ENCODE measurements at regions of chr1 and their contacts with region 1.

Region 1: DNA sequence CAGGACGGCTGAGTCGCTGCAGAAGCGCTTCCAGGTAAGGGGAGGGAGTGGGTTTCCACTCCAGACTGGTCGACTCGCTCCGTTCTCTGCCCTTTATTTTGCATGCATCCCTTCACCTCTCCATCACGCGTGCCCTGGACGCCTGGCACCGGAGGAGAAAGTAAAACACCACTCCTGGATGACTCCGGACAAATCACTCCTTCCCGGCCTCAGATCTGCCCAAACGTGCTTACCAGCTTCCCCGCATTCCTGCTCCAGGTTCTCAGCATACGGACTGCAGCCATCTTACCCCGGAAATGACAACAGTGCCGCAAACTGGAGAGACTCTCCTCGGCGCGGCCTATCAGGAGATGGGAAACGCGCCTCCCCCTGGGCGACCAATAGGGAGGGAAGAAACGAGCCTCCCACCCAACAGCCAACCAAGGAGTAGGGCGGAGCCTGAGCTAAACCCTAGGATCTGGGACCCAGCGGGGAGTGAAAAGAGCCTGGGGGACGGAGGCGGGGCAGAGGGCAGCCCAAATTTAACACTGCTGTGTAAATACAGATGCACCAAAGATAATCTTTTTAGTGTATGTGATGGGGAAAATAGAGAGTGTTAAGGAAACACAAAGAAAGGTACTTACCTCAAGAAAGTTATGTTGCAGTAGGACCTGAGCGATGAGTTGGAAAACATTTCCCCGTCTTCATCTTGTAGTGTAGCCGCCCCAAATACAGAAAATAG is at the start of gene DBT:
- DNase-seq: peak; percentile 97
- H3K4me3 Mint-ChIP-seq: no peak within 1 kb of the TSS
- H3K27ac Mint-ChIP-seq: no peak within 1 kb of the TSS
- H3K4me1 Mint-ChIP-seq: peaks cover 18% of the 10 kb centered on the region
- H3K27me3 Mint-ChIP-seq: no peaks in the 10 kb centered on the region
- total RNA-seq, gene DBT: 12.3 to 12.5 TPM

Region 2: DNA sequence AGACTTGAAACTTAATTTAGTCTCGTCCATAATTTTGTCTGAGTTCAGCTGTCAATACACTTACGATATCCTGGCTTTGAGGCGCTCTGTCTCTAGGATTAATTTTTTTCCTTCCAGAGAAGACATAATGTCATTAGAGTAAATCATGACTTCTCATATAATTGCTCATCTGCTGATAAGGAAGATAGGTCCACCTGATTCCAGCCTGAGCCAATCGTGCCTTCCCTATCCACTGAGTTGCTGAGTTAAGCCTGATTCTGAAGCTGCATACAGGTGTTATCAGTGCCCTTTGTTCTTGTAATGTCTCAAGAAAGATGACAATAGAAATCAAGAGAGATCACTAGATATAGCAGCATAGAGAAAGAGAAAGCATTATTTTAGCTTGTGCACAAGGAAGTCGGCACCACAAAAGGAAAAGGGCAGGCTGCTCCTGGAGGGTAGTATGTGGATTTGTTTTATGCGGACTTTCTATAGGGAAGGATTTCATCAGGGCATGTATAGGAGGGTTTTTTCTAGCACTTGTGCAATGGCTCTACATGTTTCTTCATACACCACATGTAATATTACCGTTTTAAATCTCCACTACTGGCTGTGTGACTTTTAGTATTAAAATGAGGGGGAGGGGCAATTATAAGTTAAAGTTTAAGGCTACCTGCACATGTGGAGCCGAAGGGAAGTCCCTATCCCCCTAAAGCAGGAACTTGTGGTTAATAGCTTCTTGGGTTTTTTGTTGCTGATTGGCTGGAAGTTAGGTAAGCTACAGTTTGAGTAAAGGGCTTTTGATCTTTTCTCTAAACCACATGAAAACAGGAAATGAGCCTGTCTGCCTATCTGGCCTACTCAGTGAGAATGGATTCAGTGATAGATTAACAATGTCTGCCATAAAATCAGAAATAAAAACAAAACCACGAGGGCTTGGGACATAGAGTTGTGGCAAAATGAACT is 1378.5 kb before region 1 on chr1:
- CTCF ChIA-PET with region 1: no interaction called
- intact Hi-C with region 1: loop called (anchors 5 kb)
- DNase-seq: peak; percentile 60
- H3K4me3 Mint-ChIP-seq: peak overlapping the region; percentile 68
- H3K27ac Mint-ChIP-seq: peak overlapping the region; percentile 97
- H3K4me1 Mint-ChIP-seq: peaks cover 23% of the 10 kb centered on the region
- H3K27me3 Mint-ChIP-seq: no peaks in the 10 kb centered on the region

Region 3: GRCh38 chr1:99969729-99970621 is 279.7 kb before region 1 on chr1 and contains the start of gene SLC35A3:
- CTCF ChIA-PET with region 1: no interaction called
- intact Hi-C with region 1: loop called (anchors 1 kb)
- DNase-seq: peak; percentile 85
- H3K4me3 Mint-ChIP-seq: peak within 1 kb of the TSS; percentile 96
- H3K27ac Mint-ChIP-seq: peak within 1 kb of the TSS; percentile 85
- H3K4me1 Mint-ChIP-seq: peaks cover 22% of the 10 kb centered on the region
- H3K27me3 Mint-ChIP-seq: no peaks in the 10 kb centered on the region
- total RNA-seq, gene SLC35A3: 13.8 to 15.5 TPM

Region 4: GRCh38 chr1:100132566-100133477 is 116.9 kb before region 1 on chr1 and contains the starts of genes SASS6 and TRMT13:
- CTCF ChIA-PET with region 1: interaction called, 3 read pairs
- intact Hi-C with region 1: loop called (anchors 1 kb)
- DNase-seq: peak; percentile 97
- H3K4me3 Mint-ChIP-seq: peak within 1 kb of the TSS; percentile 91
- H3K27ac Mint-ChIP-seq: peak within 1 kb of the TSS; percentile 87
- H3K4me1 Mint-ChIP-seq: peaks cover 37% of the 10 kb centered on the region
- H3K27me3 Mint-ChIP-seq: no peaks in the 10 kb centered on the region
- total RNA-seq, gene SASS6: 8.2 TPM
- total RNA-seq, gene TRMT13: 12.9 to 16.6 TPM

Region 5: GRCh38 chr1:100234432-100234831 is 15.3 kb before region 1 on chr1:
- CTCF ChIA-PET with region 1: no interaction called
- intact Hi-C with region 1: no loop called
- DNase-seq: no peak
- H3K4me3 Mint-ChIP-seq: no peak overlapping the region
- H3K27ac Mint-ChIP-seq: no peak overlapping the region
- H3K4me1 Mint-ChIP-seq: peaks cover 24% of the 10 kb centered on the region
- H3K27me3 Mint-ChIP-seq: no peaks in the 10 kb centered on the region

Region 6: DNA sequence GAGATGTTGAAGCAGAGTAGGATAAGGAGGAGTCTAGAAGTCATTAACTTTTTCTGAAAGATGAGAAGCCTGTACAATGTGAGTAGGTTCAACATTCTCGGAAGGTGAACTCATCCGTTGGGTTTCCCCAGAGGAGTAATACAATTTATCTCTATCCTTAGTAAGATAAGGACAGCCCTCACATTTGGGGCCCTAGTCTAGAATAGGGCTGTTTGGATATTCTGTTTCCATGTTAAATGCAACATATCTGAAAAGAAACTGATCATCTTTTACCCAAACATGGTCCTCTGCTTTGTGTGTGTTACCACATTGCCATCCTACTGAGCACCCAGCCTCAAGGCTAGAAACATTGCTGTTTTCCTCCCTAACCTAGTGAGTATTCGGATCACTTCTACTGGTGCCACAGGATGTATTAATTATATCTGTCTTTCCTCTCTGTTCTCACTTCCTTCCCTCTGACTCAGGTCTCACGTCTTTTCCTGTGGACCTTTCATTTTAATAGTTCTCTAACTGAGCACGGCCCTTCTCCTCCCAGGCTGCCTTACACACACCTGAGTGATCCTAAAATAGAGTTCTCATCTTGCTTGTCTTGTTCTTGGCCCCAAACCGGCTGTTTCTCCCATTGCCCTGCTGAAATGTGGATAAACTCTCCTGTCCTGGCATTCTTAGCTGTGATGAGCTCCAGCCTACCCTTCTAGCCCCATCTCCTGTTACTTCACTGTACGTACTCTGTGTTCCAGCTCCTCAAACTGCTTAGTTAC is 194.3 kb after region 1 on chr1:
- CTCF ChIA-PET with region 1: no interaction called
- intact Hi-C with region 1: loop called (anchors 5 kb)
- DNase-seq: peak; percentile 53
- H3K4me3 Mint-ChIP-seq: peak overlapping the region; percentile 72
- H3K27ac Mint-ChIP-seq: peak overlapping the region; percentile 96
- H3K4me1 Mint-ChIP-seq: peaks cover 85% of the 10 kb centered on the region
- H3K27me3 Mint-ChIP-seq: no peaks in the 10 kb centered on the region